Lower leg skin (tissue), 4 donors: ENCODE measurements at regions of chr1 and their contacts with region 1.

Region 1: DNA sequence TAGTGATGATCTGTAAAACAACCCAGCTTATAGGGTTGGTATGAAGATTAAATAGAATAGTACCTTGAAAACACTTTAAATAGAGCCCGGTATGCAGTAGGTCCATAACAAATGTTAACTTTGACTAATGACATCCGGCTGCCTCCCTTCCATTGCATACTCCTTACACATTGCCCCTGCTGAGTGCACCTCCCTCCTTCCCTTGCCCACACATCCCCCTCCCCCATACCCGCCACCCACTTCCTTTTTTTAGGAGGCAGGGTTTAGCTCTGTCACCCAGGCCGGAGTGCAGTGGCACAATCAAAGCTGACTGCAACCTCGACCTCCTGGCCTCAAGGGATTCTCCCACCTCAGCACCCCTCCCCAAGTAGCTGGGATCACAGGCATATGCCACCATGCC is 24.4 kb upstream of the ZC3H12A start:
- DNase-seq: no peak
- H3K4me3 ChIP-seq: no peak overlapping the region
- CTCF ChIP-seq: no peak
- POLR2A ChIP-seq: no peak

Region 2: GRCh38 chr1:37391211-37392011 is 58.5 kb before region 1 on chr1:
- intact Hi-C with region 1: no loop called
- DNase-seq: peak in 1 of 2 donors; percentile 62
- H3K4me3 ChIP-seq: no peak overlapping the region
- CTCF ChIP-seq: no peak
- POLR2A ChIP-seq: no peak

Region 3: DNA sequence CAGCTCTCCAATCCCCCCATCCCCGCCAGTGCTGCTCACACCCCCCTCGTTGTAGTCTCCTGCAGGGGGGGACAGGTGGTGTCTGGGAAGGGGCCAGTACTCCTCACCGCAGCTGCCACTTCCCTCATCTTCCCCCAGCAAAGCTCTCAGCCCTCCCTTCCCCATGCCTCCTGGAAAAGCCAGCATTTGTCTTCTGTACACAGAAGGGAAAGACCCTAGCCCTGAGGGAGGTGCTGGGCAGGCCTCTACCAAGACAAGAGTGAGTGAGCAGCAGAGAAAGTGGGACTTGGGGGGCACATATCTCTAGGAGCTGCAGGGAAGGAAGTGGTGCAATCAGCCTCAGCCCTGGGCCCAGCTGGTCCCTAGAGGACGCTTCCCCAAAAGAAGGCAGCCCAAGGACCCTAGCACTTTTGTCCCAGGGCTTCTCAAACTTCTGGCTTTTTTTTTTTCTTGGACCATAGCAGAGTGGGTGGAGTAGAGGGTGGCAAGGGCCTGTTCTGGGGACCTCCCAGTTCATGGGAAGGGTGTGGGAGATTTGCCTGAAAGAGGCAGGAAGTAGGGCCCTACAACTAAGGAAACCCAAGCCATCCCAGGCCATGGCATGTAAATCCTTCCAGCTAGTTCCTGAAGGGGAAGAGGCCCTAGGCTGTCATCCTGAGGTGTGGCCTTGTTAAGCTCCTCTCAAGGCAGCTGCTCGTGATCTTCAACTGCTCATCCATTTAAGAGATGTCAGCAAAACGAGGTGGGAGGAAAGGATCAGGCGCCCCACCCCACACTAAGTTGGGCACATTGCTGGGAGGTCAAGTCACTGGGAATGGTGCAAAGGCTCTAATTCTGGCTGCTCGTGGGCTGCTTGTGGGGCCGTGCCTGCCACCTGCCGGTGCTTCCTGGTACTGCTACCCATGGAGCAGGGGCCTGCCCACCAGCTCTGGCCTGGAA is 37.0 kb after region 1 on chr1:
- intact Hi-C with region 1: loop called (anchors 5 kb)
- DNase-seq: peak in 1 of 2 donors; percentile 96
- H3K4me3 ChIP-seq: no peak overlapping the region
- CTCF ChIP-seq: peak in 2 of 3 donors; percentile 50 to 95
- POLR2A ChIP-seq: no peak

Region 4: DNA sequence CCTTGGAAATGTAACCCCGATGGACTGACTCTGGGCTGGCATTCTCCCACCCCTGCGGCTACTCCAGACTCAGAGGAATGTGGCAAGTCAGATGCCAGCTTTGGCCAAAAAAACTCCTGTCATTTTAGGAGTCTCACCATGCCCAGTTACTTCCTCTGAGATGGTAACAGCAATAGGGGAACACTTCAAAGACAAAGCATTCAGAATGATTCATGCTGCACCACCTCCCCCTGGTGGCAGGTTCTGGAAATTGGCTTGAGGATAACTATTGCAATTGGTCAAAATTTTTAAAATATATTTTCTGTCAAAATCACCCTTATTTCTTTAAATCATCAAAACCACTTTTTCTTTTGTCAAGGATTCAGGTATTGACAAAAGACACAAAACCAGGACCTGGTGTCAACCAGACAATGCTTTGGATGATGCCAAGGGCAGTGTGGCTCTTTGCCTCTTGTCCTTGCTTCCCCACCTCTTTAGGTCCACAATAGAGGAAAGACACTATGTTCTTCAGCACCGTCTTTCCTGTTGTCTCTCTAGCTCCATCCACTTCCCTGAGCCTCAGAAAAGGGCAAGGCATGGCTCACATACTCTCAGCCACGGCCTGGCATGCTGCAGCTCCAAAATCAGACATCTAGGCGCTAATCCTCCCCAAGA is 232.5 kb after region 1 on chr1:
- intact Hi-C with region 1: loop called (anchors 10 kb)
- DNase-seq: peak; percentile 63 to 94
- H3K4me3 ChIP-seq: no peak overlapping the region
- CTCF ChIP-seq: peak in 1 of 3 donors; percentile 87
- POLR2A ChIP-seq: no peak

Region 5: DNA sequence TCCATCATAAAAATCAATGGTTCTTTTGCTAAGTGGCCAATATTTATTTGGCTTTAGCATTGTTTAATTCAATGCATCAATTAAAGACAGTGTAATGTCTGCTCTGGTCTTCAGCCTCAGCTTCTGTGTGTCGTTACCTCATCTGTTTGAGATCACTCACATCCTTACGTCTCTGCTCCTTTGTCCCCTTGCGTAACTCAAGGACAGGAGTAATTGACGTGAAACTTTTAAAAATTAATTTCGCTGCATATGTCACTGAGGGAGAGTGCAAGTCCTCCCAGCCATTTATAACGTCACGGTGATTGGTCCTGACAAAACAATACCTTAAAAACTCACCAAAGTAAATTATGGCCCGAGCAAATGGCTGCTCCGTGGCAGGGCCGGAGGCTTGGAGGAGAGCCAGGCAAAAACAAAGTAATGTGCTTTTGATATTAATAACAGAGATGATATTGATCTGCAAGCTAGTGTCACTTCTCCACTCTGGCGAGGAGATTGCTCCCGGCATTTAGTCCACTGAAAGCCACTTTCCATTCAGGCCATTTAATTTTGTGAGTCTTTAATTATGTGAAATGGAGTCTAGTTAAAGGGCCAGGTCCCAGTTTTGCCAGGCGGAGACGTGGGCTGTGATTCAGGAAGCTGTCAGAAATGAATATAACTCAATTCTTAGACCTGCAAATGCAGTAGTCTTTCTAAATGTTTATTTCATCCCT is 747.5 kb after region 1 on chr1:
- intact Hi-C with region 1: no loop called
- DNase-seq: no peak
- H3K4me3 ChIP-seq: no peak overlapping the region
- CTCF ChIP-seq: no peak
- POLR2A ChIP-seq: no peak